Mammary epithelial cell (primary cell): ENCODE measurements at regions of chr3 and their contacts with region 1.

Region 1: GRCh38 chr3:111173328-111173900 is 101.8 kb downstream of the NECTIN3 start:
- DNase-seq: peak; percentile 19
- H3K4me3 ChIP-seq: no peak overlapping the region
- H3K27ac ChIP-seq: no peak overlapping the region
- H3K4me1 ChIP-seq: no peaks in the 10 kb centered on the region
- H3K27me3 ChIP-seq: no peaks in the 10 kb centered on the region
- CTCF ChIP-seq: no peak

Region 2: DNA sequence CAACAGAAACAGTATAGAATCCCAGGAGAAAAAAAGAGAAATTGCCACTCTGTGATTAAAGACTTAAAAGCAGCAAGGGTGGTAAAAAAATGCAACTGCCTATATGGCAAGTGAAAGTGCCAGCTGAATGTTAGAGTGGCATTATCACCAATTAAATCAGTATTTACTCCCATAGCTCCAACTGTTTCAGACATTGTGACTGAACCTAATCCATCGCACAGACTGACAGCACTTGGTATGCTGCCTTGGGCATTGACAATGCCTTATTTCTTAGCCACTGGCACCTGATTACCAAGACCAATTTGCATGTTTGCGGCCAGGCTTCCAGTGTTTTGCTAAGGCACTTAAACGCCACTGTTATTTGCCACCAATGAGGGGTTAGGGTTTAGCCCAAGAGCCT is 303.7 kb before region 1 on chr3:
- CTCF ChIA-PET with region 1: no interaction called
- dilution Hi-C with region 1: no loop called
- in situ Hi-C with region 1: no loop called
- intact Hi-C with region 1: no loop called
- DNase-seq: no peak
- H3K4me3 ChIP-seq: no peak overlapping the region
- H3K27ac ChIP-seq: no peak overlapping the region
- H3K4me1 ChIP-seq: no peaks in the 10 kb centered on the region
- H3K27me3 ChIP-seq: no peaks in the 10 kb centered on the region
- CTCF ChIP-seq: no peak

Region 3: GRCh38 chr3:110910346-110910955 is 263.0 kb before region 1 on chr3:
- CTCF ChIA-PET with region 1: interaction called, 16 read pairs
- dilution Hi-C with region 1: no loop called
- in situ Hi-C with region 1: no loop called
- intact Hi-C with region 1: no loop called
- DNase-seq: no peak
- H3K4me3 ChIP-seq: no peak overlapping the region
- H3K27ac ChIP-seq: no peak overlapping the region
- H3K4me1 ChIP-seq: no peaks in the 10 kb centered on the region
- H3K27me3 ChIP-seq: no peaks in the 10 kb centered on the region
- CTCF ChIP-seq: no peak

Region 4: DNA sequence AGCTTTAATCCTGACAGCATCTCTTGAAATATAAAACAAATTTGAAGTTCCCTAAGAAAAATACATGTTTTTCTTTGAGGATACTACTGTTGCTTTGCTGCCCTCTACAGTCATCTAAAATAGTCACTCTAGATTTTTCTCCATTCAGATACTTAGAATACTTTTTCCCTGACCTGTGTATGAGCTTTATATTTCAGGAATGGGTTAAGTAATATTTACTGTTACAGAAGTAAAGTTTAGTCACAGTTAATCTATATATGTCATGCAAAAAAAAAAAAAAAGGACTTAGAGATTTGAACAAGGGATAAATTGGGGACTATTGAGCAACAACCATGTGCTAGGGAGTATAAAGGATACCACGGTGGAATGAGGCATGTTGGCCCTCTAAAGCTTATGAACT is 93.0 kb before region 1 on chr3:
- CTCF ChIA-PET with region 1: no interaction called
- dilution Hi-C with region 1: no loop called
- in situ Hi-C with region 1: no loop called
- intact Hi-C with region 1: no loop called
- DNase-seq: peak; percentile 26
- H3K4me3 ChIP-seq: no peak overlapping the region
- H3K27ac ChIP-seq: no peak overlapping the region
- H3K4me1 ChIP-seq: peaks cover 2% of the 10 kb centered on the region
- H3K27me3 ChIP-seq: no peaks in the 10 kb centered on the region
- CTCF ChIP-seq: peak; percentile 26 to 57

Region 5: DNA sequence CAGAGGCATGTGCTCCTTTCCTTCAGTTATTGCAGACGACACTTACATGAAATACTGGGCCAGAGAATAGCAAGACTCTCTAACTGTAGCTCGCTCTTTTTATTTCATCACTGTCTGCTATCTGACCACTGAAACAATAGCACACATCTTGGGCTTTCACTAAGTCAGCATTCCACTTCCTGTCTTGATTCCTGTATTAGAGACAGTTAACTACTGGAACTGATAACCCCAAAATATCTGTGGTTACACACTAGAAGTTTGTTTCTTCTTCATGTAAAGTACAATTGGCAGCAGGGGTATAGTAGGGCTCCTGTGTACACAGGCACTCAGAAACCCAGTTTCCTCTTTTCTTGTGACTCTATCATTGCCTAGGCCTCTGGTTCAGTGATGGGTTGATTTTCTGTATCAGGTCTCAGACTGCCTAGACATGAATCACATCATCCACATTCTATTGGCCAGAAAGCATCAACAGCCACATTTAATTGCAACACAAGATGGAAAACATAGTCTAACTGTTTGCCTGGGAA is 138.4 kb after region 1 on chr3:
- CTCF ChIA-PET with region 1: no interaction called
- dilution Hi-C with region 1: no loop called
- in situ Hi-C with region 1: no loop called
- intact Hi-C with region 1: no loop called
- DNase-seq: no peak
- H3K4me3 ChIP-seq: no peak overlapping the region
- H3K27ac ChIP-seq: no peak overlapping the region
- H3K4me1 ChIP-seq: no peaks in the 10 kb centered on the region
- H3K27me3 ChIP-seq: no peaks in the 10 kb centered on the region
- CTCF ChIP-seq: no peak

Region 6: DNA sequence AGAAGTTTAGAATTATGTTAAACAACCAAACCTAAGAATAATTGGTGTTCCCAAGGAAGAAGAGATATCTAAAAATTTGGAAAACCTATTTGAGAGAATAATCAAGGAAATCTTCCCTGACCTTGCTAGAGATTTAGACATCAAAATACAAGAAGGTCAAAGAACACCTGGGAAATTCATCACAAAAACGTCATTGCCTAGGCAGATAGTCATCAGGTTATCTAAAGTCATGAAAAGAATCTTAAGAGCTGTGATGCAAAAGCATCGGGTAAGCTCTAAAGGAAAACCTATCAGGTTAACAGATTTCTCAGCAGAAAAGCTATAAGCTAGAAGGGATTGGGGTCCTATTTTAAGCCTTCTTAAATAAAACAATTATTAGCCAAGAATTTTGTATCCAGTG is 234.6 kb after region 1 on chr3:
- CTCF ChIA-PET with region 1: no interaction called
- dilution Hi-C with region 1: no loop called
- in situ Hi-C with region 1: no loop called
- intact Hi-C with region 1: no loop called
- DNase-seq: no peak
- H3K4me3 ChIP-seq: no peak overlapping the region
- H3K27ac ChIP-seq: no peak overlapping the region
- H3K4me1 ChIP-seq: no peaks in the 10 kb centered on the region
- H3K27me3 ChIP-seq: no peaks in the 10 kb centered on the region
- CTCF ChIP-seq: no peak